ENCODE measurements at regions of chr2 and their contacts with region 1.

Region 1: GRCh38 chr2:165874445-165875039 is 79.0 kb downstream of the TTC21B start:
- DNase-seq: peak; percentile 63
- H3K4me3 Mint-ChIP-seq: no peak overlapping the region
- H3K27ac Mint-ChIP-seq: no peak overlapping the region
- H3K4me1 Mint-ChIP-seq: peaks cover 13% of the 10 kb centered on the region
- H3K27me3 Mint-ChIP-seq: no peaks in the 10 kb centered on the region
- CTCF ChIP-seq: peak; percentile 68

Region 2: DNA sequence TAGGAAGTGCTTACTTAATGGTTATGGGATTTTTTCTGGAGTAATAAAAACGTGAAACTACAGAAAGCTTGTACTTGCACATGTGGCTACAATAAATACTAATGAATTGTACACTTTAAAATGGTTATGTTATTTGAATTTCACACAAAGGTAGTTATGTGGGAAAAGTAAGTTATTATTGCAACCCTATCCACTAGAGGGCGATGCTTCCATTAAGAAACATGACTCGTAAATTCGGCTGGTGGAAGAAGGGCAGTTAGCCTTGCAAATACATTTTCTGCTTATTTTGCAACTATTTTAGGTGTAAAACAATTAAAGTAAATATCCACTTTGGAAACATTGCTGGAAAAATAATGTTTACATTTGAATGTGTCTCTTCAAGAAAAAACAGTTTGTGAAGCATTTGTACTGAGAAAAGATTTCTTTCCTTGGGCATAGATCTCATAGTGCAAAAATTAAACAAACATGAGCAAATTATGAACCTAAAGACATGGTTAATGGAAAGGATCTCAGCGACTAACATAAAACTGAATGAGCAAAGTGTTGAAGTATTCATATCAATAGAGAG is 473.2 kb before region 1 on chr2:
- CTCF ChIA-PET with region 1: interaction called, 60 read pairs
- POLR2A ChIA-PET with region 1: interaction called, 4 read pairs
- intact Hi-C with region 1: loop called (anchors 1 kb)
- DNase-seq: peak; percentile 68
- H3K4me3 Mint-ChIP-seq: no peak overlapping the region
- H3K27ac Mint-ChIP-seq: no peak overlapping the region
- H3K4me1 Mint-ChIP-seq: no peaks in the 10 kb centered on the region
- H3K27me3 Mint-ChIP-seq: peaks cover 78% of the 10 kb centered on the region
- CTCF ChIP-seq: peak; percentile 61

Region 3: GRCh38 chr2:165558832-165559231 is 315.7 kb before region 1 on chr2:
- CTCF ChIA-PET with region 1: interaction called, 5 read pairs
- POLR2A ChIA-PET with region 1: no interaction called
- intact Hi-C with region 1: loop called (anchors 5 kb)
- DNase-seq: no peak
- H3K4me3 Mint-ChIP-seq: no peak overlapping the region
- H3K27ac Mint-ChIP-seq: no peak overlapping the region
- H3K4me1 Mint-ChIP-seq: no peaks in the 10 kb centered on the region
- H3K27me3 Mint-ChIP-seq: peaks cover 35% of the 10 kb centered on the region
- CTCF ChIP-seq: no peak

Region 4: DNA sequence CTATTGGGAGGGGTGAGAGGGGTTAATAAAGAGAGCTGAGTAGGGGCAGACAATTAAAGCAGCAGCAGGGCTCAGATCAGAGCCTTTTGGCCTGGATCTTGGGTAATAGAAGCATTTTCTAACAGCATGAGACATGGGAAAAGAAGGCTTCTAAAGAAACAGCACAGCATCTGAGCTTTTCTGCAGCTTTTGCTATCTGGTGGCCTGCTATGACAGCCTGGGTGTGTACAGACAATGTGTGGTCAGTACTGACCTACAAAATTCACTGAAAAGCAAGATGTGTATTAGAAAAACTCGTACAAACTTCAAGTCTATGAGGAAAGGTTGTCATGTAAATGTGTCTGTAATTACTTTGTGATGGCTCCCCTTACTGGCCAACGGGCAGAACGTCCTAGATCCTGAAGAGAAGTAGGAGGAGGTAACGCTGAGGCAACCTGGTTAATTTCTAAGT is 176.1 kb before region 1 on chr2:
- CTCF ChIA-PET with region 1: interaction called, 17 read pairs
- POLR2A ChIA-PET with region 1: no interaction called
- intact Hi-C with region 1: loop called (anchors 2 kb)
- DNase-seq: peak; percentile 68
- H3K4me3 Mint-ChIP-seq: no peak overlapping the region
- H3K27ac Mint-ChIP-seq: no peak overlapping the region
- H3K4me1 Mint-ChIP-seq: no peaks in the 10 kb centered on the region
- H3K27me3 Mint-ChIP-seq: peaks cover 32% of the 10 kb centered on the region
- CTCF ChIP-seq: peak; percentile 50

Region 5: DNA sequence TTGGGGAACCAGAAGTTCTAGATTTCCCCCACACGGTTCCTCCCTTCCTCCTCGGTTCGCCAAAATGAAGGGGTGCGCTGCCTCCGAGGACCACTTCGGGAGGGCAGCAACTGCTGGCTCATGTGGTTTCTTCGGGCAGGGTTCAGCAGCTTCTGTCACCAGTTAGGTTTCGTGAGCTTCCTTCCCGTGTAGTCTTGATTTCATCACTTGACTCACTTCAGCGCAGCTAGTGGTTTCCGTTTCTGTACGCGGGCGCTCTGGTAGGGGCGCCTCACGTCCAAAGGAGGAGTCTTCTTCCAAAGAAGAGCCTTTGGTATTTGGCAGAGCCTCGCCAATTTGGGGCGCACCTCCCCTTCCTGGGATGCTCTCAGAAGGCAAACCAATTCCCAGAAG is 80.0 kb before region 1 on chr2:
- CTCF ChIA-PET with region 1: interaction called, 11 read pairs
- POLR2A ChIA-PET with region 1: interaction called, 25 read pairs
- intact Hi-C with region 1: loop called (anchors 1 kb)
- DNase-seq: peak; percentile 81
- H3K4me3 Mint-ChIP-seq: peak overlapping the region; percentile 87
- H3K27ac Mint-ChIP-seq: peak overlapping the region; percentile 39
- H3K4me1 Mint-ChIP-seq: peaks cover 10% of the 10 kb centered on the region
- H3K27me3 Mint-ChIP-seq: no peaks in the 10 kb centered on the region
- CTCF ChIP-seq: no peak

Region 6: GRCh38 chr2:165863810-165864261 is 10.7 kb before region 1 on chr2:
- CTCF ChIA-PET with region 1: interaction called, 11 read pairs
- POLR2A ChIA-PET with region 1: interaction called, 3 read pairs
- intact Hi-C with region 1: no loop called
- DNase-seq: no peak
- H3K4me3 Mint-ChIP-seq: no peak overlapping the region
- H3K27ac Mint-ChIP-seq: no peak overlapping the region
- H3K4me1 Mint-ChIP-seq: no peaks in the 10 kb centered on the region
- H3K27me3 Mint-ChIP-seq: no peaks in the 10 kb centered on the region
- CTCF ChIP-seq: no peak